ENCODE measurements at regions of chr22 and their contacts with region 1.

Region 1: GRCh38 chr22:40975366-40975765 is 24.2 kb downstream of the RBX1 start:
- DNase-seq: no peak
- ATAC-seq: no peak
- H3K4me3 ChIP-seq: no peak overlapping the region
- H3K4me3 Mint-ChIP-seq: no peak overlapping the region
- H3K27ac ChIP-seq: no peak overlapping the region
- H3K27ac Mint-ChIP-seq: no peak overlapping the region
- H3K4me1 ChIP-seq: no peaks in the 10 kb centered on the region
- H3K4me1 Mint-ChIP-seq: no peaks in the 10 kb centered on the region
- H3K27me3 ChIP-seq: no peaks in the 10 kb centered on the region
- H3K27me3 Mint-ChIP-seq: no peaks in the 10 kb centered on the region
- CTCF ChIP-seq: no peak

Region 2: GRCh38 chr22:40877488-40877887 is 97.9 kb before region 1 on chr22:
- CTCF ChIA-PET with region 1: no interaction called
- POLR2A ChIA-PET with region 1: no interaction called
- intact Hi-C with region 1: no loop called
- DNase-seq: no peak
- ATAC-seq: no peak
- H3K4me3 ChIP-seq: no peak overlapping the region
- H3K4me3 Mint-ChIP-seq: no peak overlapping the region
- H3K27ac ChIP-seq: no peak overlapping the region
- H3K27ac Mint-ChIP-seq: no peak overlapping the region
- H3K4me1 ChIP-seq: no peaks in the 10 kb centered on the region
- H3K4me1 Mint-ChIP-seq: no peaks in the 10 kb centered on the region
- H3K27me3 ChIP-seq: no peaks in the 10 kb centered on the region
- H3K27me3 Mint-ChIP-seq: no peaks in the 10 kb centered on the region
- CTCF ChIP-seq: no peak

Region 3: DNA sequence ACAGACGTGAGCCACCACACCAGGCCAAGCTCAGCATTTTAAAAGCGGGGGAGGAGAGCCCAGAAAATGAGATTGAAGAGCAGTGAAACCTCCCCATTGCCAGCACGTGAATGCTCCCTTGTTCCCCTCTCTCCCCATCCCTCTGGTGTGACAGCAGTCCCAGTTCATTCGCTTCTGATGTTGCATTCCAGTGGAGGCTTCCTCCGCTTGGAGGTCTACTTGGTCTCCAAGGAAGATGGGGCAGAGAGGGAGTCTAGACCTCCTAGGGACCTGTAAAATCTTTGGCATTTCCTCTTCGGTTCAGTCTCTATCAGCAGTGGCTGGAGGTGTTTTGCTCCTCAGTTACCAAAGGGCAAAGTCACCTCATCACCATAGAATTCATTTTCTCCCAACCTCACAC is 86.8 kb after region 1 on chr22:
- CTCF ChIA-PET with region 1: no interaction called
- POLR2A ChIA-PET with region 1: no interaction called
- intact Hi-C with region 1: loop called in 1 of 2 experiments (anchors 10 kb)
- DNase-seq: no peak
- ATAC-seq: no peak
- H3K4me3 ChIP-seq: no peak overlapping the region
- H3K4me3 Mint-ChIP-seq: no peak overlapping the region
- H3K27ac ChIP-seq: no peak overlapping the region
- H3K27ac Mint-ChIP-seq: no peak overlapping the region
- H3K4me1 ChIP-seq: no peaks in the 10 kb centered on the region
- H3K4me1 Mint-ChIP-seq: no peaks in the 10 kb centered on the region
- H3K27me3 ChIP-seq: no peaks in the 10 kb centered on the region
- H3K27me3 Mint-ChIP-seq: no peaks in the 10 kb centered on the region
- CTCF ChIP-seq: no peak

Measured in CD8-positive, alpha-beta T cell (primary cell).